ENCODE measurements at regions of chr12 and their contacts with region 1.

Region 1: DNA sequence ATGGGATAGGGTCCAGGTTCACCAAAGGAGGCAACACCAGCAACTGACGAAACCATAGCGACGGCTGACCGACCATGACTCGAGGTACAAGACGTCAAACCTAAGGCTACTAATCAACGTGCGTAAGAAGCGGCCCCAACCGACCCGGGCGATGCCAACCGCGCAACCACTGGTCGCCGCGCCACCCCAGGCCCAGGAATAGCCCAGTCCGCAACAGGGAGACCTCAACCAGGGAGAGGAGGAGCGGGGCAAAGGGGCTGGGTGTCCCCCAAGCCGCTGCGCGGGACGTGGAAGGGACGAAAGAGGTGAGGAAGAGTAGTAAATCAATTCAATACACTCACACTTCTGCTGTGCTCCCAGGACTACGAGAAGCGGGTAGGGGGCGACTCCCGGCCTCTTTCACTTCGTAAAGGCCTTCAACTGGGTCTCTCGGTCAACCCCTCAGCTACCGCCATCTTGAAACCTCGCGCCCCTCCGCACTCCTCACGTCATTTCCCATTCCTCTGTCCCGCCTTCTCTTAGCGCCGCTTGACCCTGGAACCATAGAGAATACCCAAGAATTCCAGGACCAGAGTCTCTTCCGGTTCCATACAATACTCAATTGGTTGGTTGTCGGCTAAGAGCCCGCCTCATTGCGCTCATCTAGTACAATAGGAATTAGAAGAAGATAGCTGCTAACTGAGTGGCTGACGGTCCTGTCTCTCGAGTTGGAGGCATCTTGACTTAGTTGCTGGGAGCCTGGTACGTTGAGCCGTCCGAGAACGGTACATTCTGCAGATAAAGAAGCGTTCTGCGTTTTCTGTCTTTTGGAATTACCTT is at the starts of genes C12orf60 and WBP11:
- DNase-seq: peak; percentile 95 to 99
- H3K4me3 ChIP-seq: peak within 1 kb of the TSS; percentile 76 to 82 (median 80)
- H3K27ac ChIP-seq: peak within 1 kb of the TSS; percentile 86 to 96 (median 93)
- H3K4me1 ChIP-seq: peaks cover 11 to 39% (median 23%) of the 10 kb centered on the region in 4 donors
- H3K27me3 ChIP-seq: no peaks in the 10 kb centered on the region
- CTCF ChIP-seq: no peak
- EP300 ChIP-seq: no peak
- POLR2A ChIP-seq: peak in 1 of 4 donors; percentile 52
- total RNA-seq, gene C12orf60: 1.0 to 3.1 (median 1.5) TPM in 3 of 5 donors, not detected in the others
- total RNA-seq, gene WBP11: 1.4 to 65.9 (median 19.2) TPM

Region 2: DNA sequence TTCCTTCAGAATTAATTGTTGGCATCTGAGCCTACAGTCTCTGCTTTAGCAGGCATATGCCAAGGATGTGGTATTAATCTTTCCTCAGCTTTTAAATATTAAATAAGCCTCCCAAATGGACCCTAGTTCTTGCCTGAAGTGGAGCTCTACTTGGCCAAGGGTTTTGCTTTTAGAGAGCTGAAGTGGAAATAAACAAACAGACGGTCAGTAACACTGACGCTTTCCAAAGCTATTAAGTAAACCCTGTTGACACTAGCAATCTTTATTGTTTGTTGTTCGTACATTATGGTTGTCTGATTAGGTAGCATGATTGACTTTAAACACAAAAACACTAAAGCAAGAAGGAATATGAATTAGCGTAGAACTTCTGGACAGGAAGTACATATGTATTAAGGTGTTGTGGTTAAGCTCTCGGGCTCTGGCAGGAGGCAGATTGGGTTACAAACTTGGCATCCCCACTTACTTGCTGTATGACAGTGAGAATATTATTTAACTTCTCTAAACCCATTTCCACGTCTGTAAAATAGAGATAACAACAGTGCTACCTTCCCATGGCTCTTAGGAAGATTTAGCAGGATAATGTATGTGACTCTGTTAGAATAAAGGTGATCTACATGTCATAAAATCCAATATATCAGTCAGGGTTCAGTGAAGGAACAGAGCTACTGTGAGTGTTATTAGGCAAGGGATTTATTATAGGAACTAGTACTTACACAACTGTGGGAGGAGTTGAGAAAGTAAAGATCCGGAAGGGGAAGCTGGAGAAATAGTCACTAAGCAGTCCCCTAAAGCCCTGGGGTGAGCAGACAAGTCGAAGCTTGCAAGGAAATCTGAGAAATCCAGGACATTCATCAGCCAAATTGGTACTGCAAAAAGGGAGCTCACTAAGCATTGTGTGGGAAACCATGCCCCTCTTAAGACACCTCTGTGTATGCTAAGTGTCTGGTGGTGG is 530.0 kb before region 1 on chr12:
- intact Hi-C with region 1: no loop called
- DNase-seq: no peak
- H3K4me3 ChIP-seq: no peak overlapping the region
- H3K27ac ChIP-seq: peak overlapping the region in 4 of 5 donors; percentile 24 to 69 (median 40)
- H3K4me1 ChIP-seq: peaks cover 0 to 12% (median 6%) of the 10 kb centered on the region in 4 donors
- H3K27me3 ChIP-seq: no peaks in the 10 kb centered on the region
- CTCF ChIP-seq: no peak
- EP300 ChIP-seq: no peak
- POLR2A ChIP-seq: no peak

Region 3: GRCh38 chr12:14769969-14770495 is 33.2 kb before region 1 on chr12:
- intact Hi-C with region 1: loop called (anchors 2 kb)
- DNase-seq: peak; percentile 90 to 95
- H3K4me3 ChIP-seq: peak overlapping the region; percentile 62 to 75 (median 70)
- H3K27ac ChIP-seq: peak overlapping the region; percentile 91 to 99 (median 96)
- H3K4me1 ChIP-seq: peaks cover 0 to 52% (median 29%) of the 10 kb centered on the region in 4 donors
- H3K27me3 ChIP-seq: no peaks in the 10 kb centered on the region
- CTCF ChIP-seq: peak in 5 of 7 experiments; percentile 80 to 95 (median 86)
- EP300 ChIP-seq: no peak
- POLR2A ChIP-seq: peak in 2 of 4 donors; percentile 25 to 35

Region 4: DNA sequence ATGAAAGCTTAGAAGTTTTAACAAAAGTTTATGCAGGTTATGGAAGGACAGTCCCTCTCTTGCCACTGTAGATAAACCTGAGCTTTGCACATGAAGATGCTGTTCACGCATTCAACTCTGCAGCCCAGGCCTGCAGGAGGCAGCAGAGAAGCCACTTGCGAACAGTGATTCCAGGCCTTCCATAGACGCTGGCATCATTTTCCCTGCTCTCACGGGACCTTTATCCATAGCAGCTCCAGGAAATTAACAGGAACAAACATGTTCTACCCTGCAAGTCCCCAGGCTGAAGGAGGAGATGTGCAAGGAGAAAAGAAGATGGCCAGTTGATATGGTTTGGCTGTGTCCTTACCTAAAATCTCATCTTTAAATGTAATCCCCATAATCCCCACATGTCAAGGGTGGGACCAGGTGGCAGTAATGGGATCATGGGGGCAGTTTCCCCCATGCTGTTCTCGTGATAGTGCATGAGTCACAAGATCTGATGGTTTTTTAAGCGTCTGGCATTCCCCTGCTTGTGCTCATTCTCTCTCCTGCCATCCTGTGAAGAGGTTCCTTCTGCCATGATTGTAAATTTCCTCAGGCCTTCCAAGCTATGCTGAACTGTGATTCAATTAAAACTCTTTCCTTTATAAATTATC is 133.1 kb after region 1 on chr12:
- intact Hi-C with region 1: no loop called
- DNase-seq: no peak
- H3K4me3 ChIP-seq: no peak overlapping the region
- H3K27ac ChIP-seq: no peak overlapping the region
- H3K4me1 ChIP-seq: peaks cover 0 to 16% (median 8%) of the 10 kb centered on the region in 4 donors
- H3K27me3 ChIP-seq: no peaks in the 10 kb centered on the region
- CTCF ChIP-seq: no peak
- EP300 ChIP-seq: no peak
- POLR2A ChIP-seq: no peak

Measured in stomach (tissue), 19 donors.